HCT116 (cell line): ENCODE measurements at regions of chr15 and their contacts with region 1.

Region 1: GRCh38 chr15:88657326-88658069 is 18.7 kb downstream of the ISG20 start:
- DNase-seq: peak; percentile 38
- ATAC-seq: peak; percentile 77
- H3K4me3 ChIP-seq: no peak overlapping the region
- H3K27ac ChIP-seq: no peak overlapping the region
- H3K4me1 ChIP-seq: peaks cover 6 to 17% of the 10 kb centered on the region in 2 experiments; a peak in 3 of 4 replicates
- H3K27me3 ChIP-seq: no peaks in the 10 kb centered on the region
- CTCF ChIP-seq: peak; percentile 83 to 95 (median 90)
- POLR2A ChIP-seq: no peak
- RAD21 ChIP-seq: peak; percentile 90

Region 2: GRCh38 chr15:88299497-88299896 is 358.0 kb before region 1 on chr15:
- CTCF ChIA-PET with region 1: no interaction called
- POLR2A ChIA-PET with region 1: no interaction called
- RAD21 ChIA-PET with region 1: no interaction called
- intact Hi-C with region 1: no loop called
- DNase-seq: no peak
- ATAC-seq: no peak
- H3K4me3 ChIP-seq: no peak overlapping the region
- H3K27ac ChIP-seq: no peak overlapping the region
- H3K4me1 ChIP-seq: no peaks in the 10 kb centered on the region
- H3K27me3 ChIP-seq: peaks cover 51% of the 10 kb centered on the region
- CTCF ChIP-seq: no peak
- POLR2A ChIP-seq: no peak
- RAD21 ChIP-seq: no peak

Region 3: GRCh38 chr15:88454867-88455810 is 202.4 kb before region 1 on chr15:
- CTCF ChIA-PET with region 1: no interaction called
- POLR2A ChIA-PET with region 1: no interaction called
- RAD21 ChIA-PET with region 1: no interaction called
- intact Hi-C with region 1: no loop called
- DNase-seq: peak; percentile 48
- ATAC-seq: peak; percentile 90
- H3K4me3 ChIP-seq: no peak overlapping the region
- H3K27ac ChIP-seq: no peak overlapping the region
- H3K4me1 ChIP-seq: peaks cover 0 to 7% of the 10 kb centered on the region in 2 experiments; a peak in 2 of 4 replicates
- H3K27me3 ChIP-seq: no peaks in the 10 kb centered on the region
- CTCF ChIP-seq: peak; percentile 48 to 90 (median 81); a peak in 5 of 6 replicates
- POLR2A ChIP-seq: no peak
- RAD21 ChIP-seq: peak; percentile 64

Region 4: GRCh38 chr15:88586401-88587162 is 70.9 kb before region 1 on chr15:
- CTCF ChIA-PET with region 1: no interaction called
- POLR2A ChIA-PET with region 1: no interaction called
- RAD21 ChIA-PET with region 1: no interaction called
- intact Hi-C with region 1: no loop called
- DNase-seq: no peak
- ATAC-seq: no peak
- H3K4me3 ChIP-seq: no peak overlapping the region
- H3K27ac ChIP-seq: no peak overlapping the region
- H3K4me1 ChIP-seq: no peaks in the 10 kb centered on the region
- H3K27me3 ChIP-seq: peaks cover 13% of the 10 kb centered on the region
- CTCF ChIP-seq: no peak
- POLR2A ChIP-seq: no peak
- RAD21 ChIP-seq: no peak

Region 5: GRCh38 chr15:88701561-88702095 is 44.1 kb after region 1 on chr15:
- CTCF ChIA-PET with region 1: interaction called, 4 read pairs
- POLR2A ChIA-PET with region 1: no interaction called
- RAD21 ChIA-PET with region 1: no interaction called
- intact Hi-C with region 1: loop called (anchors 1 kb)
- DNase-seq: peak; percentile 15
- ATAC-seq: peak; percentile 93
- H3K4me3 ChIP-seq: no peak overlapping the region
- H3K27ac ChIP-seq: no peak overlapping the region
- H3K4me1 ChIP-seq: no peaks in the 10 kb centered on the region
- H3K27me3 ChIP-seq: peaks cover 45% of the 10 kb centered on the region
- CTCF ChIP-seq: peak; percentile 64 to 73 (median 69)
- POLR2A ChIP-seq: no peak
- RAD21 ChIP-seq: peak; percentile 78

Region 6: GRCh38 chr15:88834211-88834812 is 176.8 kb after region 1 on chr15:
- CTCF ChIA-PET with region 1: interaction called, 82 read pairs
- POLR2A ChIA-PET with region 1: interaction called, 4 read pairs
- RAD21 ChIA-PET with region 1: interaction called, 8 to 13 read pairs
- intact Hi-C with region 1: loop called (anchors 1 kb)
- DNase-seq: peak; percentile 22
- ATAC-seq: peak; percentile 89
- H3K4me3 ChIP-seq: no peak overlapping the region
- H3K27ac ChIP-seq: no peak overlapping the region
- H3K4me1 ChIP-seq: peaks cover 0 to 3% of the 10 kb centered on the region in 2 experiments; a peak in 1 of 4 replicates
- H3K27me3 ChIP-seq: no peaks in the 10 kb centered on the region
- CTCF ChIP-seq: peak; percentile 70 to 89 (median 79)
- POLR2A ChIP-seq: no peak
- RAD21 ChIP-seq: peak; percentile 89

Region 7: GRCh38 chr15:88865498-88866099 is 208.1 kb after region 1 on chr15:
- CTCF ChIA-PET with region 1: no interaction called
- POLR2A ChIA-PET with region 1: no interaction called
- RAD21 ChIA-PET with region 1: no interaction called
- intact Hi-C with region 1: no loop called
- DNase-seq: no peak
- ATAC-seq: no peak
- H3K4me3 ChIP-seq: no peak overlapping the region
- H3K27ac ChIP-seq: no peak overlapping the region
- H3K4me1 ChIP-seq: no peaks in the 10 kb centered on the region
- H3K27me3 ChIP-seq: peaks cover 8% of the 10 kb centered on the region; the same call in 1 of the 2 replicates
- CTCF ChIP-seq: no peak
- POLR2A ChIP-seq: no peak
- RAD21 ChIP-seq: no peak

Region 8: DNA sequence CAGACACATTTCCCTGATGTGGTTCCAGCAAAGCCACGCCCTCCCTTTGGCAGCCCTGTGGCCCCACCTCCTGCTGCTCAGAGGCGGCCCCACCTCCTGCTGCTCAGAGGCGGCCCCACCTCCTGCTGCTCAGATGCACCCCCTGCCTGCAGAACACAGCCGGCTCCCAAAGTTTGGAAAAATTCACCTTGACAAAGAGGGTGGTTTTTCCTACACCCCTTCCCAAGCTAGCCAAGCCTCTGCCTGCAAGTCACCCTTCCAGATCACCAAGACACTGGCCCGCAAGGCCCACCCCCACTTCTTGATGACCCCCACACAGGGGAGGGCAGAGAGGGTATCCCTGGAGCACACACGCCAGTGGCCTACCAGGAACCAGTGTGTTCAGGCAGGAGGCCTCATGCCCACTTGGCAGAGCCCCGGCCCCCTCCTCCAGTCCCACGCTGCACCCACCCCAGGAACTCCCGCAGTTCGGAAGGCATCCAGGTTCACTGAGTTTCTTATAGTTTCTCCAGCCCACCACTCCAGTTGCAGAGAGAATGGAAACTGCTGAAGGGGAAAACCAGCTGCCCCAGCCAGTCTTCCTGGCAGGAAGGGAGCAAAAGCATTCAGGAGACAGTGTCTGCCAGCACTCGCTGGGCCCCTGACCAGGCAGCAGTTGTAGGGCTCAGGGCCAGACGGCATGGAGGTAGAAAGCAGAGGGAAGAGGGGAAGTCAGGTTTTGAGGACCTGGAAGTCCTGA is 240.1 kb after region 1 on chr15:
- CTCF ChIA-PET with region 1: no interaction called
- POLR2A ChIA-PET with region 1: no interaction called
- RAD21 ChIA-PET with region 1: interaction called in 1 of 2 experiments, 4 read pairs
- intact Hi-C with region 1: loop called (anchors 5 kb)
- DNase-seq: no peak
- ATAC-seq: peak; percentile 86
- H3K4me3 ChIP-seq: no peak overlapping the region
- H3K27ac ChIP-seq: peak overlapping the region; percentile 23; the same call in 1 of the 2 replicates
- H3K4me1 ChIP-seq: peaks cover 23 to 50% of the 10 kb centered on the region in 2 experiments
- H3K27me3 ChIP-seq: no peaks in the 10 kb centered on the region
- CTCF ChIP-seq: peak; percentile 50 to 75 (median 60); a peak in 5 of 6 replicates
- POLR2A ChIP-seq: no peak
- RAD21 ChIP-seq: 0 out of 2 replicates have a peak, but pooled peaks have one; percentile 5